BJ (cell line): ENCODE measurements at regions of chr11 and their contacts with region 1.

Region 1: GRCh38 chr11:10366568-10367370 is 61.9 kb downstream of the ADM start:
- DNase-seq: peak; percentile 68
- H3K4me3 ChIP-seq: no peak overlapping the region
- H3K27me3 ChIP-seq: no peaks in the 10 kb centered on the region
- CTCF ChIP-seq: peak; percentile 95

Region 2: GRCh38 chr11:10255388-10256125 is 111.2 kb before region 1 on chr11:
- CTCF ChIA-PET with region 1: no interaction called
- POLR2A ChIA-PET with region 1: no interaction called
- DNase-seq: no peak
- H3K4me3 ChIP-seq: no peak overlapping the region
- H3K27me3 ChIP-seq: no peaks in the 10 kb centered on the region
- CTCF ChIP-seq: no peak

Region 3: GRCh38 chr11:10322830-10323792 is 43.7 kb before region 1 on chr11:
- CTCF ChIA-PET with region 1: interaction called, 48 read pairs
- POLR2A ChIA-PET with region 1: interaction called, 4 read pairs
- DNase-seq: peak; percentile 69
- H3K4me3 ChIP-seq: no peak overlapping the region
- H3K27me3 ChIP-seq: no peaks in the 10 kb centered on the region
- CTCF ChIP-seq: peak; percentile 47

Region 4: GRCh38 chr11:10328314-10329090 is 38.3 kb before region 1 on chr11:
- CTCF ChIA-PET with region 1: interaction called, 48 read pairs
- POLR2A ChIA-PET with region 1: interaction called, 5 read pairs
- DNase-seq: peak; percentile 69
- H3K4me3 ChIP-seq: no peak overlapping the region
- H3K27me3 ChIP-seq: no peaks in the 10 kb centered on the region
- CTCF ChIP-seq: no peak

Region 5: DNA sequence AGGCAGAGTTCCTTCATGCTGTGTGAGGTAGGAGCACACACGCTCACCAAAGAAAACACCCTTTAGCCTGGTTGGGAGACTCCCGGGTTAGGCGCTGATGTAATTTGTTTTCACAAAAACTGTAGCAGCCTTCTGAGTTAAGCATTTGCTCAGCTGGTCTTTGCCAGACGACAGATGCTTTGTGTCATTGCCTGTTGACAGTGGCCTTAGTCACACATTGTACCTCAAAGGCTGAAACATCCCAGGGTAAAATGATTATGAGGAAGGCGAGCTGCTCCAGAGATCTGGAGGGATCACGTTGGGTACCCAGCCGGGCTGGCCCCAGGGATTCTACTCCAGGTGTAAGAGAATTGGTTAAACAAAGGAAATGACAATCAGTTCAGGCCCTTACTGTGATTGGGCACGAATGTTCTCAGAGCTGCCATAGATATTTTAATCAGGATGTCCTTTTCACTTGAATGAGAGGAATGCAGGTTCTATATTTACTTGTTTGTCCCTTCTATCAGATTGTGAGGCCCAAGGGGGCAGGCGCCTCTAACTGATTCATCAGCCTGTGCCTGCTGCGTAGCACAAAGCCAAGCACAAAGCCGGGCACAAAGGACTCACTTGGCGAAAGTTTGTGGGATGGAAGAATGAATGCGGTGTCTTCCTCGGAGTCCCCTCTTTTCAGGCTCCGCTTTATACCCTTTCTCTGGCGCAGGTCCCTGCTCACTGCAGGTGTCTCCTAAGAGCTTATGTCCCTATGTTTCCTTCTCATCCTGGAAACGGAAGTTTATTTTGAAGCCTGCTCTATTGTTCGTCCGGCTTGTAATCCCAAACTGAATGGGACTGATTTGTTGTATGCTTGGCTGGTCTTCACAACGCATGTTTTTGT is 14.8 kb before region 1 on chr11:
- CTCF ChIA-PET with region 1: interaction called, 39 read pairs
- POLR2A ChIA-PET with region 1: interaction called, 5 read pairs
- DNase-seq: peak; percentile 62
- H3K4me3 ChIP-seq: no peak overlapping the region
- H3K27me3 ChIP-seq: no peaks in the 10 kb centered on the region
- CTCF ChIP-seq: no peak

Region 6: DNA sequence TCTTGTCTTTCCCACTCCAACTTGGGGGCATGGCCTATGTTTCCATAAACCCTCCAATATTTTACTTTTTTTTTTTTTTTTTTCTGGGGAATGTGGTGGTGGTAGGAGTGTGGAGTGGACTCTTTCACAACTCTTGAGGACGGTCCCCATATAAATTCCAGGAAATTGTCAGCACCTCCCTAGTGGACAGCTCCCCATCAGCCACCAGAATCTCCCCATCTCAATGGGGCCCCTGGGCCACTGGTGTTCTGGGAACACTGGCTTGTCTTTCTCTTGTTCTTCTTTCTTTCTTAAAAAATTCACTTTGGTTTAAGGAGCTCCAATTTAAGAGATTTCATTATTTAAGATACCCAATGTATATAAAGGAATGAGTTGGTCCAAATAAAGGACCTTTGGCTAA is 12.3 kb after region 1 on chr11:
- CTCF ChIA-PET with region 1: interaction called, 18 read pairs
- POLR2A ChIA-PET with region 1: no interaction called
- DNase-seq: no peak
- H3K4me3 ChIP-seq: no peak overlapping the region
- H3K27me3 ChIP-seq: no peaks in the 10 kb centered on the region
- CTCF ChIP-seq: no peak

Region 7: GRCh38 chr11:10387206-10388083 is 20.7 kb after region 1 on chr11:
- CTCF ChIA-PET with region 1: interaction called, 18 read pairs
- POLR2A ChIA-PET with region 1: no interaction called
- DNase-seq: peak; percentile 96
- H3K4me3 ChIP-seq: no peak overlapping the region
- H3K27me3 ChIP-seq: no peaks in the 10 kb centered on the region
- CTCF ChIP-seq: no peak